Prostate gland (tissue), 2 donors: ENCODE measurements at regions of chr10 and their contacts with region 1.

Region 1: DNA sequence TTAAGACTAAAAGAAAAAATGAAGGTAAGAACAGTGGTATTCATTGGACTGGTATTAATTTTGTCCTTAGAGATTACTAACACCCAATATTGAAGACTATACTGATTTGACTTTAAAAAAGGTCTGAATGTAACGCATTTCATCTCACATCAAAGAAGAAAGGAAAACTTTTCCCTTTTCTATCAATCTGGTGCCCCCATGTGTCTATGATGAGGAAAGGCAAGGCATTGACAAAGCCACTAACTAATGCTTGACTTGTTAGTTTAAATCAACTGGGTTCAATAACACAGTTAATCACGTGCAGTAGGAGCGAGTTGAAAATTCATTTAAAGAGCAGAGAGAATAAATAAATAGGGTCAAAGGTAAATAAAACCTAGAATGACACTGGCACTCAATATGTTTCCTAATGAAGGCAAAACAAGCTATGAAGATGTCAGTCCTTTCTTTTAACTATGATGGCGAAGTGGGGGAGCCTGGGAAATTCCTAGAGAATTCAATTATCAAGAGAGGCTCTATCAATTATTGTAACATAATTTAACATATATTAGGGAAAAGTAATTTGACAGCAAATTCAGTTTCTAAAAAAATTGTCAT is 180.9 kb downstream of the ANK3 start:
- DNase-seq: no peak
- H3K4me3 ChIP-seq: no peak overlapping the region
- H3K27ac ChIP-seq: no peak overlapping the region
- H3K4me1 ChIP-seq: no peaks in the 10 kb centered on the region
- H3K27me3 ChIP-seq: no peaks in the 10 kb centered on the region
- CTCF ChIP-seq: peak in 3 of 4 experiments; percentile 46 to 77 (median 76)
- POLR2A ChIP-seq: no peak

Region 2: DNA sequence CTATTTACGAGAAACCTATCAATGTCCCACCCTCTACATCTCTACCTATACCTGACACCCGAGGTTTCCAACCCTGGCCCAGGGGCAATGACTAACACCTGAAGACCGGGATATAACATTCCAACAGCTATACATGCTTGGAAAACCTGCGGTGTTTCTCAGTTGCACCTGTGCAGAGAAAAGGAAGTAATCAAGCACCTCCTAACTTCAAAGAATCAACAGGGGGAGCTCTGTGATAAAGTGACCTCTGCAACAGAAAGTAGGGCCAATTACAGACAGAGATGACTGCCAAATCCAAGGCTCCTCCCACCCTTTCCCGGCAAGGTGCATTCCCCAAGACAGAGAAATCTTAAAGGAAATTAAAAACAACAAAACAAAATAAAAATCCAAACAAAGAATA is 343.7 kb before region 1 on chr10:
- intact Hi-C with region 1: loop called (anchors 10 kb)
- DNase-seq: peak; percentile 50
- H3K4me3 ChIP-seq: no peak overlapping the region
- H3K27ac ChIP-seq: no peak overlapping the region
- H3K4me1 ChIP-seq: peaks cover 4% of the 10 kb centered on the region
- H3K27me3 ChIP-seq: no peaks in the 10 kb centered on the region
- CTCF ChIP-seq: peak in 3 of 4 experiments; percentile 30 to 59 (median 55)
- POLR2A ChIP-seq: no peak

Region 3: DNA sequence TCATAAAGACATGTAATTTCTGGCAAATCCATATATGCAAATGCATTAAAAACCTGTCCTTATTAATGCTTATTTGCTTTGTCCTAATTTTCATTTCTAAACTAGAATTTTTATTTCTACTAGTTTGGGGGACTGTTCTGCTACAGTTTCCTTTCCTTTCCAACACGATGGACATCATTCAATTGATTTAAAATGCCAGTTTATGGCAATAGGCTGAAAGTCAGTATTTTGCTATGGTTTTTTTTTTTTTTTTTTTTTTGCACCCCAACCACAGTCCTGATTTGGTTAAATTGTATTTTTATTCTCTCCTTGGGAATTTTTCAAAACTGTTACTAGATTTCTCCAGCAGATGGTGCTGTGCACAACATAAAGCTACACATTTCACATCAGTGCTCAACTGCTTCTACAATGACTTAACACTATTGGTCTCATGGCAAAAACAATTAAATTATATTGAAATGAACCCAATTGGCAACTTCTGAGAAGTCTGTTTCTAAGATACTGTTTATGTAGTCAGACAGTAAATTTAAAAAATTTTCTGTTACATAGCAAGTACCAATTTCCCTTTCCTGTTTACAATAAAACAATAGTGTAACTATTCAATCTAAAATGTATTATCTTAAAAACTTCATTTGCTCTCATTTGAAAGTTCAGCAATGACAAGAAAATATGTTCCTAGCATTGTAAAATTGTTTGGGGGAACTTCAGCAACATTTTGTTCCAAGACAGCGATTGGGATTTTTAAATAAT is 108.6 kb before region 1 on chr10:
- intact Hi-C with region 1: loop called (anchors 2 kb)
- DNase-seq: no peak
- H3K4me3 ChIP-seq: no peak overlapping the region
- H3K27ac ChIP-seq: no peak overlapping the region
- H3K4me1 ChIP-seq: no peaks in the 10 kb centered on the region
- H3K27me3 ChIP-seq: no peaks in the 10 kb centered on the region
- CTCF ChIP-seq: peak; percentile 35 to 78 (median 65)
- POLR2A ChIP-seq: no peak

Region 4: DNA sequence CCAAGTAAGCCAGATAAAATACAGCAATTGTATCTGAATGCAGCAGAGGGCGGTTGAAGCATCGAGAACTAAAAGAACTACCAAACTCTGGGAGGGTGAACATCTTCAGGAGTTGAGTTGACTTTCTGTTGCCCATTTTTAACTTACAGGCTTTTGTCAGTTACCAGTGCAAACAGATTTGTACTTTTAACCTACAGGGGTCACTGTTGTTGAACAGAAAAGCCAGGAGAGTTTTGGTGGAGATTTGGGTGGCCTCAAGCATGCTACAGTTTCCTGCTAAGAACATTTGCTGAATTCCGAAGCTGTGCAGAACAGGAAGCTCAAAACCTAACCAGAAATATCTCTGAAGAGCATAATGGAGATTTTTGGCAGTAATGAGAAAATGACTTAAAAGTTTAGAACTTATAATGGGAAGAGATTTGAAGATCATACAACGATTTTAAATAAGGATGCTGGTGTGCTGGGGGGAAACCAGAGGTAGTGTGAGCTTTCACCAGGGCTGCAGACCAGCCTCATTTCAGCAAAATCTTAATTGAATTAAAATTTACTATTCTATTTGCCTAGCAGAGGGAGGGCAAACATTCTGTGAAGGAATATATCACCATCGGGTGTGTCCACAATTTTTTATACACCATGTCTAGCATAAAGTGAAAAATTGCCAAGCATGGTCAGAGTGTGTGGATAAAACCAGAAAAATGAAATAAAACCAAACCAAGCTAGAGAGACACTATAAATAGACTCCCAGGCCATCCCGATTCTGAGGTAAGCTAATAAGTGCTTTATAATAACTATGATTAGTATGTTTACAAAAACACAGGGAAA is 93.8 kb before region 1 on chr10:
- intact Hi-C with region 1: loop called (anchors 5 kb)
- DNase-seq: no peak
- H3K4me3 ChIP-seq: no peak overlapping the region
- H3K27ac ChIP-seq: no peak overlapping the region
- H3K4me1 ChIP-seq: no peaks in the 10 kb centered on the region
- H3K27me3 ChIP-seq: no peaks in the 10 kb centered on the region
- CTCF ChIP-seq: peak in 3 of 4 experiments; percentile 48 to 57 (median 53)
- POLR2A ChIP-seq: no peak